Uterus (tissue), 4 donors: ENCODE measurements at regions of chr5 and their contacts with region 1.

Region 1: DNA sequence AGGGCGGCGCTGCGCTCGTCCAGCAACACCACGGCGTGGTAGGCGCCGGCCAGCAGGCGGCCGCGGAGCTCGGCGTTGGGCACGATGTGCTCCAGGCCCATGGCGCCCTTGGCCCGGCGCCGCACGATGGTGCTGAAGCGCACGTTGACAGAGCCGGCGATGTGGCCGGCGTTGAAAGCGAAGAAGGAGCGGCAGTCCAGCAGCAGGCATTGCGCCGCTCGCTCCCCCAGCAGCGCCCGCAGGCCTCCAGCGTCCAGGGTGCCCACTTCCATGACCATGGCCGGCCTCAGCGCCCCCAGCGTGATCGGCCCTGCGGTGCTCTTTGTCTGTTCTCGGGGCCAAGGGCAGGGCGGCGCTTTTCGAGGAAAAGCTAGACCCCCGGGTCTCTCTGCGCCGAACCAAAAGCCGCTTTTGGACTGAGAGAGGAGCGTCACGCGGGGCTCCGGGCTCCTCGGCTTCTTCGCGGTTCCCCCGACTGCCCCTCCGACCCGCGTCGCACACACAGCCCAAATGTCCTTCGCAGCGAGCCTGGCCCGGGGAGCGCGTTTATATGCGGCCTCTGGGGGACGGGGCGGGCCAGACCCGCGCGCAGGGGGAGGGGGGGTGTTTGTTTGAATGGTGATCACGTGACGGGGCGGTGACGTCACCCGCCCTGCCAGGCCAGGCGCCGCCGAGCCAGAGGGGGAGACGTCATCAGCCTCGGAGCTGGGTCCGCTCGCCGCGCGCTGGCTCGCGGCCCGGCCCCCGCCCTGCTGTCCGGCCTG is at the start of gene DUSP1:
- DNase-seq: peak; percentile 99 to 100
- H3K4me3 ChIP-seq: peak within 1 kb of the TSS; percentile 68 to 85
- H3K27ac ChIP-seq: peak within 1 kb of the TSS; percentile 99
- H3K4me1 ChIP-seq: peaks cover 0 to 3% of the 10 kb centered on the region in 2 donors
- H3K27me3 ChIP-seq: no peaks in the 10 kb centered on the region
- CTCF ChIP-seq: peak in 3 of 4 experiments; percentile 42 to 74 (median 61)
- POLR2A ChIP-seq: peak; percentile 99
- total RNA-seq, gene DUSP1: 189 to 2,046 (median 515) TPM

Region 2: DNA sequence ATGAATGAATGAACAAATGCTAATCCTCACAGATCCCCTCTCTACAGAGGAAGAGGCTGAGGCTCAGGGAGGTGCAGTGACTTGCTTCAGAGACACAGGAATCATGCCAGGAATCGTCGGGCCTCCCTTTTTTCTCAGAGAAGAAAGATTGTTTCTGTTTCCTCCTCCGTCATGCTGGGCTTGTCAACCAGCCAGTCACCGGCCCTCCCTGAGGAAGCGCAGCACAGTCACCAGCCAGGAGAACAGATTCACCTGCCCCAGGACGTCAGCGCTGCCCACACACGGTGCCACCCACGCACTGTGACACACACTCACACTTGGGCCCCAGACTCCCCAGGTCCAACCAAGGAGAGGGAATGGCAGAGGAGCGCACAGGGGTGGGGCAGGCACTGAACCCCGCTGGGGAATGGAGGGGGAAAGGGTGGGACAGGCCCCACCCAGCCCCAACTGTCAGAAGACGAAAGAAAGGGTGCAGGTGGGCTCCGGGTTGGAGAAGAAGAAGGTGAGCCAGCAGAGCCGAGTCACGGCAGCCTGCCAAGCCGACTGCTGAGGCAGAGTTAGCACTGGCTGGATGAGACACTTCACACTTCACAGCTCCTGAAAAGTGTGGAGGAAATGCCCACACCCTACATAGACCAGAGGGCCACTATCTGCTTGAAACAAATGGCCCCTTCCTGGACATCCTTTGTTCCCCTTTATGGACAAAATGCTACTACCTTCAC is 49.4 kb after region 1 on chr5:
- intact Hi-C with region 1: no loop called
- DNase-seq: peak; percentile 79 to 86
- H3K4me3 ChIP-seq: no peak overlapping the region
- H3K27ac ChIP-seq: peak overlapping the region; percentile 54 to 73
- H3K4me1 ChIP-seq: peaks cover 0 to 4% of the 10 kb centered on the region in 2 donors
- H3K27me3 ChIP-seq: no peaks in the 10 kb centered on the region
- CTCF ChIP-seq: no peak
- POLR2A ChIP-seq: peak in 1 of 2 donors; percentile 32

Region 3: GRCh38 chr5:172868924-172869591 is 98.2 kb after region 1 on chr5:
- intact Hi-C with region 1: loop called (anchors 10 kb)
- DNase-seq: peak; percentile 91 to 95
- H3K4me3 ChIP-seq: no peak overlapping the region
- H3K27ac ChIP-seq: peak overlapping the region; percentile 89 to 94
- H3K4me1 ChIP-seq: peaks cover 42 to 54% of the 10 kb centered on the region in 2 donors
- H3K27me3 ChIP-seq: no peaks in the 10 kb centered on the region
- CTCF ChIP-seq: peak; percentile 31 to 69 (median 56)
- POLR2A ChIP-seq: peak in 1 of 2 donors; percentile 30

Region 4: GRCh38 chr5:172902497-172903200 is 131.8 kb after region 1 on chr5:
- intact Hi-C with region 1: loop called (anchors 10 kb)
- DNase-seq: peak; percentile 92
- H3K4me3 ChIP-seq: no peak overlapping the region
- H3K27ac ChIP-seq: peak overlapping the region; percentile 91 to 93
- H3K4me1 ChIP-seq: peaks cover 29 to 31% of the 10 kb centered on the region in 2 donors
- H3K27me3 ChIP-seq: no peaks in the 10 kb centered on the region
- CTCF ChIP-seq: peak; percentile 42 to 72 (median 56)
- POLR2A ChIP-seq: peak in 1 of 2 donors; percentile 13